ENCODE measurements at regions of chr6 and their contacts with region 1.

Region 1: DNA sequence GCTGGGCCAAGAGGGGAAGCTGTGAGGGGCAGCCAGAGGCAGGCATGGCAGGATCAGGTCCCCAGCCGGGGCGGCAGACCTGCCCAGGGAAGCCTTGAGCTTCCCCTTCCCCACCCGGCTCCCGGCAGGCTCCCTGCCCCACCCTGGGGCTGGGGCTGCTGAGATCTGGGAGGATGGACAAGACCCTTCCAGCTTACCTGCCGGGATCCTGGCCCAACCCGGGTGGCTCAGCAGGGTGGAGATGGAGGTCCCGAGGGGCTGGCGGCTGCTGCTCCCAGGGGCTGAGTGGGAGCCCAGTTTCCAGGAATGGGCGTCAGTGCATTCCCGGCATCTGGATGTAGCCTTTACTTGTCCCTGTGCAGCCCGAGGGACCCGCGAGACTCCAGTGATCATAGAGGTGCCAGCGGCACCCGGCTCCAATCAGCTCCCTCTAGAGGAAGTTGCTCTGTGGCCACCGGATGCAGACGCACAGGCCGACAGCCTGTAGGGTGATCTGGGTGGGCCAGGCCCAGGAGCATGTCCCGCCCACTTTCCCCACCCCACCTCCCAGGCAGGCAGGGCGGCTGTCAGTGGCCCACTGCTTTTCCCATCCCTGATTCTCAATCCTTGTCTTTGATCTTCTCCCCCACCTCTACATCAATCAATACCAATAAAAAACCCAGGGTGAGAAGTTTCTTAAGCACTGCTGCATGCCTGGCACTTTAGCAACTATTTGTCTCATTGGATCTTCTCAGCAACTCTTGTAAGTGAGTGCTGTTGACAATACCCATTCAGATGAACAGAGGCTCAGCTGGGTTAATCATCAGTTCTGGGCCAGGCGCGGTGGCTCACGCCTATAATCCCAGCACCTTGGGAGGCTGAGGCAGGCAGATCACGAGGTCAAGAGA is at the start of gene BAK1:
- DNase-seq: peak; percentile 46
- H3K4me3 ChIP-seq: peak within 1 kb of the TSS; percentile 84
- CTCF ChIP-seq: peak; percentile 67

Region 2: DNA sequence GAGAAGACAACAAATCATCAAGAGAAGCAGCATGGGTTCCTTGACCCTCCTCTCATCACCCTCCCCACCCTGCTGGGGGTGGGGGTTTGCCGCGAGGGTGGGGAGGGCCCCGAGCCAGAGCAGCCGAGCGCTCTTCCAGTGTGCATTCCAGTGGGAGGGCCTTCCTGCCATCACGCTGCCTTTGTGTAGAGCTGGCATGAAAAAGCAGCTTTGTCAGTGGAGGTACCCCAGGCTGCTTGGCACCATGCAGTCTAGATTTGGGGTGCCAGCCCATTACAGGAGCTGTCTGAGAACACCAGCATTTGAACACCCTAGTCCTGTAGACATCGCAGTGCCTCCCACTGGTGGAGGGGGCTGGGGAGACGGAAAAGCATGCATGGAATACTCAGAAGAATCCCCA is 12.2 kb before region 1 on chr6:
- CTCF ChIA-PET with region 1: interaction called, 17 read pairs
- POLR2A ChIA-PET with region 1: interaction called, 4 read pairs
- DNase-seq: no peak
- H3K4me3 ChIP-seq: no peak overlapping the region
- CTCF ChIP-seq: no peak

Region 3: DNA sequence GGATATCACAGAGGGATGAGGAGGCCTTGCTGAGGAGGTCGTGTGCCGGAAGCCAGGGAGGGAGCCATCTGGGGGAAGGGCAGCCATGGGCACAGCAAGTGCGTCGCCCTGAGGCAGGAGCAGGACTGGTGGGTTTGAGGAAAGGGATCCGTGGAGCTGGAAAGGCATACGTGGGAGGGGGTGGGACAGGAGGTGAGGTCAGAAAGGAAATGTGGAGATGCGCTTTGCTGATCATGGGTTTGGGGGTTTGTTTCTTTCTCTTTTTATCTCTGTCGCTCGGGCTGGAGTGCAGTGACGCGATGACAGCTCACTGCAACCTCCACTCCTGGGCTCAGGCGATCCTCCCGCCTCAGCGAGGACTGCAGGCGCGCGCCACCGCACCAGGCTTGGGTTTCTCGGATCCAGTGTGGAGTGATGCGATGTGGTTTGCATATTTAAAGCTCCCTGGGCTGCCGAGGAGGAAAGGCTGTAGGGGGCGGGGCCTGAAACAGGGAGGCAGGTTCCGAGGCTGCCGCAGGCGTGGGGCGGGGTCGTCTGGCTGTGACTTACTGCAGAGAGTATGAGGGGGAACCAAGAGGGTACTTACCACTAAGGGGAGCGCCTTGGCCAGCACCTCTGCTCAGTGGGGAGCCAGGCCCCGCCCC is 12.5 kb after region 1 on chr6:
- CTCF ChIA-PET with region 1: interaction called, 30 read pairs
- POLR2A ChIA-PET with region 1: no interaction called
- DNase-seq: no peak
- H3K4me3 ChIP-seq: no peak overlapping the region
- CTCF ChIP-seq: no peak